ENCODE measurements at regions of chr6 and their contacts with region 1.

Region 1: GRCh38 chr6:30556066-30556905 is at the start of gene GNL1:
- DNase-seq: peak; percentile 93 to 96 (median 93)
- ATAC-seq: peak; percentile 78 to 87 (median 82)
- H3K4me3 ChIP-seq: peak within 1 kb of the TSS; percentile 73 to 99 (median 90)
- H3K27ac ChIP-seq: peak within 1 kb of the TSS; percentile 95 to 99 (median 98)
- H3K4me1 ChIP-seq: peaks cover 0 to 30% (median 17%) of the 10 kb centered on the region in 12 donors
- H3K27me3 ChIP-seq: no peaks in the 10 kb centered on the region
- CTCF ChIP-seq: peak in 1 of 12 donors; percentile 3
- POLR2A ChIP-seq: peak in 1 of 2 donors; percentile 42
- total RNA-seq, gene GNL1: 9.1 to 32.4 (median 17.4) TPM

Region 2: GRCh38 chr6:30600451-30600961 is 44.2 kb after region 1 on chr6:
- intact Hi-C with region 1: loop called in 1 of 10 experiments (anchors 5 kb)
- DNase-seq: peak in 2 of 5 donors; percentile 33 to 54
- ATAC-seq: peak in 3 of 4 donors; percentile 3 to 5 (median 4)
- H3K4me3 ChIP-seq: no peak overlapping the region
- H3K27ac ChIP-seq: no peak overlapping the region
- H3K4me1 ChIP-seq: peaks cover 0 to 11% (median 0%) of the 10 kb centered on the region in 12 donors
- H3K27me3 ChIP-seq: no peaks in the 10 kb centered on the region
- CTCF ChIP-seq: no peak
- POLR2A ChIP-seq: no peak

Region 3: DNA sequence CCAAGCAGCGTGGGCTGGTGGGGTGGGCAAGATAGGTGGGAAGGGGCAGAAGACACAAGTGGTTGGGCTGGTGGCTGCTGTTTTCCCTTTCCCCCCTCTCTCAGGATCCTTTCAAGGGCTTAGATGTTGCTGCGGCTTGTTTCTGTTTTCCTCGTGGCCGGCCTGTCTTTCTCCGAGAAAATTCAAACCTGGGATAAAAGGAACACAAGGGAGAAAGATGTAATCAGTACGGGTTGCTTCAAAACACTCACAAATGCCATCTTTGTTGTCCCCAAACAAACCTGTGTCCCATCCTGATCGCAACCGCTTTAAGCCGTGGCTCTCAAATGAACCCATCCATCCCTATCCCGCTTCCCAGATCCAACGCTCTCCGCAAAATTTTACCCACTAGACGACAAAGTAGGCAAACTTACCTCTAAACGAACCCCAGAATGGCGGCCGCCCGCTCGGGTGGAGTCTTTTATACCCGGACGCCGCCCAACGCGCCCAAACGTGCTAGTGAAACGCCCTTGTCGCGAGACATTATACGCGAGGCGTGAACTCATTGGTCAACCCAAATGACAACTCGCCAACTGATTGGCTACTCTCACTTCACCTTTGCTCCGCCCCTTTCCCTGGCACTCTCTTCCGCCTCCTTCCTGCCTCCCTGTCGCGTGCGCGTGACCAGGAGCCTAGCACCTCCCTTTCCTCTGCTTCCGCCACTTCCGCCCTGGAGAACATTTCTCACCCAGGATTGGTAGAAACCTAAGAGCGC is 60.7 kb after region 1 on chr6 and contains the start of gene PPP1R10:
- intact Hi-C with region 1: loop called in 4 of 10 experiments (anchors 1 to 5 kb)
- DNase-seq: peak; percentile 97 to 100 (median 100)
- ATAC-seq: peak; percentile 87 to 92 (median 92)
- H3K4me3 ChIP-seq: peak within 1 kb of the TSS; percentile 57 to 92 (median 78)
- H3K27ac ChIP-seq: peak within 1 kb of the TSS; percentile 94 to 99 (median 97)
- H3K4me1 ChIP-seq: peaks cover 0 to 42% (median 37%) of the 10 kb centered on the region in 12 donors
- H3K27me3 ChIP-seq: no peaks in the 10 kb centered on the region
- CTCF ChIP-seq: no peak
- POLR2A ChIP-seq: peak; percentile 99
- total RNA-seq, gene PPP1R10: 21.7 to 44.9 (median 29.9) TPM

Region 4: DNA sequence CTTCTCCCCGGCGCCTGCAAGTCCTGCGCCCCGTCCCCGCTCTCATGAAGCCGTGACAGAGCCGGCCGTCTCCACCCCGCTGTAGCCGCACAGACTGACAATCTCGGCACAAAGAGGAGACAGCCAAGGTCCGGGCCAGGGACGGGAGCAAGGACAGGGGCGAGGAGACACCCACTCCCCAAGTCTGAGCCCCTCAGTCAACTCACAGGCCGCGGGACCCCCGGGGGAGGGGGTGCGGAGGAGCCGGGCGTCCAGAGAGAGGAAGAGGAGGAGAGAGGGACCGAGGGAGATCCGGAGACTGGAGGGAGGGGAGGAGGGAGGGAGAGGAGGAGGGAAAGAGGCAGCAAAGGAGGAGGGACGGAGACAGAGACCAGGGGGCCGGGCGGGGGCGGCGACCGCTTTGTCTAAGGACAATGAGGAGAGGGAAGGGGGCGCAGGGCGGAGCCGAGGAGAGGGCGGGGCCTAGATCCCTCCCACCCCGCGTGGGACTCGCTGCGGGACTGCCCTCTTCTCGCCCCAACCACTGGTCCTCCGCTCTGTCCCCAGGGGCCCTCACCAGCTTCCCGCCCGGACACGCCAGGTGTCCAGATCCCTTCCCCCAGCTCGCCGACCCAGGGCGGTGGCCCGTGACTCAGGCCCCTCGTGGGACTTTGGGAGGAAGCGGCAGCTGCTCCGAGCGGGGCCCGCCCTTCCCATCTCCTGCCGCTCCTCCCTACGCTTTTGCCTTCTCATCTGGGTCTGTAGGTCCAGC is 130.8 kb after region 1 on chr6:
- intact Hi-C with region 1: no loop called
- DNase-seq: peak; percentile 97 to 99 (median 98)
- ATAC-seq: peak; percentile 71 to 85 (median 79)
- H3K4me3 ChIP-seq: peak overlapping the region; percentile 52 to 96 (median 74)
- H3K27ac ChIP-seq: peak overlapping the region; percentile 92 to 100 (median 98)
- H3K4me1 ChIP-seq: peaks cover 4 to 78% (median 46%) of the 10 kb centered on the region in 12 donors
- H3K27me3 ChIP-seq: no peaks in the 10 kb centered on the region
- CTCF ChIP-seq: no peak
- POLR2A ChIP-seq: no peak

Measured in heart left ventricle (tissue), 16 donors.